ENCODE measurements at regions of chr10 and their contacts with region 1.

Region 1: GRCh38 chr10:60646966-60647796 is 131.1 kb upstream of the CDK1 start:
- DNase-seq: peak; percentile 32 to 75 (median 35)
- ATAC-seq: peak; percentile 86
- H3K4me3 ChIP-seq: no peak overlapping the region
- H3K27ac ChIP-seq: no peak overlapping the region
- H3K4me1 ChIP-seq: peaks cover 0 to 3% of the 10 kb centered on the region in 2 experiments; a peak in 1 of 5 replicates
- H3K27me3 ChIP-seq: no peaks in the 10 kb centered on the region
- CTCF ChIP-seq: peak; percentile 60 to 83 (median 65); a peak in 5 of 6 replicates
- EP300 ChIP-seq: no peak
- POLR2A ChIP-seq: no peak
- RAD21 ChIP-seq: peak; percentile 82 to 85

Region 2: DNA sequence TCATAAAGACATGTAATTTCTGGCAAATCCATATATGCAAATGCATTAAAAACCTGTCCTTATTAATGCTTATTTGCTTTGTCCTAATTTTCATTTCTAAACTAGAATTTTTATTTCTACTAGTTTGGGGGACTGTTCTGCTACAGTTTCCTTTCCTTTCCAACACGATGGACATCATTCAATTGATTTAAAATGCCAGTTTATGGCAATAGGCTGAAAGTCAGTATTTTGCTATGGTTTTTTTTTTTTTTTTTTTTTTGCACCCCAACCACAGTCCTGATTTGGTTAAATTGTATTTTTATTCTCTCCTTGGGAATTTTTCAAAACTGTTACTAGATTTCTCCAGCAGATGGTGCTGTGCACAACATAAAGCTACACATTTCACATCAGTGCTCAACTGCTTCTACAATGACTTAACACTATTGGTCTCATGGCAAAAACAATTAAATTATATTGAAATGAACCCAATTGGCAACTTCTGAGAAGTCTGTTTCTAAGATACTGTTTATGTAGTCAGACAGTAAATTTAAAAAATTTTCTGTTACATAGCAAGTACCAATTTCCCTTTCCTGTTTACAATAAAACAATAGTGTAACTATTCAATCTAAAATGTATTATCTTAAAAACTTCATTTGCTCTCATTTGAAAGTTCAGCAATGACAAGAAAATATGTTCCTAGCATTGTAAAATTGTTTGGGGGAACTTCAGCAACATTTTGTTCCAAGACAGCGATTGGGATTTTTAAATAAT is 547.0 kb before region 1 on chr10:
- CTCF ChIA-PET with region 1: interaction called, 5 read pairs
- POLR2A ChIA-PET with region 1: no interaction called
- in situ Hi-C with region 1: no loop called
- intact Hi-C with region 1: loop called (anchors 5 kb)
- DNase-seq: peak; percentile 53 to 77 (median 60)
- ATAC-seq: peak; percentile 83
- H3K4me3 ChIP-seq: no peak overlapping the region
- H3K27ac ChIP-seq: peak overlapping the region; percentile 54; the same call in 1 of the 3 replicates
- H3K4me1 ChIP-seq: peaks cover 0 to 7% of the 10 kb centered on the region in 2 experiments; a peak in 2 of 5 replicates
- H3K27me3 ChIP-seq: no peaks in the 10 kb centered on the region
- CTCF ChIP-seq: peak; percentile 55 to 89 (median 61); a peak in 4 of 6 replicates
- EP300 ChIP-seq: peak; percentile 50; the same call in 1 of the 2 replicates
- POLR2A ChIP-seq: no peak
- RAD21 ChIP-seq: peak; percentile 65 to 85

Region 3: DNA sequence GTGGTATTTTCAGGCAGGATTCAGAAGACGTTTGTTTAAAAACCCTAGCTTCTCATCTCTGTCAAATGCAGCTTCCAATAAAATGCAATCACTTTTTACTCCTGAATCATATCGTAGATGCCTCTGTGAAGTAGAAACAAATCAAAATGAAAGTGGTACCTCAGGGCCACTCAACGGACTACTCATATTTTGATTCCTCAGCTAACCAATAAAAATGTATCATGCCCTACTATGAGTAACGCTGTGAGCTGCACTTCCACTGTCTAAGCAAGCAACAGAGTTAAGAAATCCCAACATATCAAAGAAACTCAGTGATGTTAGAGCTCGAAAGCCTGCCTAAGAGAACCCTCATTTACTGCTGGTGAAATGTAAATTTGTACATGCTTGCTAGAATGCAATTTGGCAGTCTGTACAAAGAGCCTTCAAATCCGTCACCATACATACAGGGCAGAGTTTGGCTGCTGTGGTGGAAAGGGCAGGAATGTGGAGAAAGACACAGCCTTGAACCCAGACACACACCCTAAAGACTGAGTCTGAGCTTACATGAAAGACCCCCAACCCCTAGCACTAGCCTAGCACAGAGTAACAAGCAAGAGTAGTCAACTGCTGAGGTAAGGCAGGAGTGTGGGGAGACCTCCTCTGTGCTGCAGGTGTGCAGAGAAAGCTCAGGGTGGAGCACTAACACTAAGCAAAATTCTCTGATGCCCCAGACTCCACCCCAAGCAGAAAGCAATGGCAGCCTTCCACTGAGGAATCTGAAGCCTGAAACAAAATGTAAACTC is 409.0 kb before region 1 on chr10:
- CTCF ChIA-PET with region 1: no interaction called
- POLR2A ChIA-PET with region 1: interaction called, 3 read pairs
- in situ Hi-C with region 1: no loop called
- intact Hi-C with region 1: loop called (anchors 5 kb)
- DNase-seq: peak in 2 of 4 experiments; percentile 60 to 62
- ATAC-seq: peak; percentile 99
- H3K4me3 ChIP-seq: no peak overlapping the region
- H3K27ac ChIP-seq: no peak overlapping the region
- H3K4me1 ChIP-seq: peaks cover 5 to 12% of the 10 kb centered on the region in 2 experiments; a peak in 2 of 5 replicates
- H3K27me3 ChIP-seq: no peaks in the 10 kb centered on the region
- CTCF ChIP-seq: peak; percentile 64 to 81 (median 76)
- EP300 ChIP-seq: no peak
- POLR2A ChIP-seq: no peak
- RAD21 ChIP-seq: peak; percentile 90 to 91

Region 4: GRCh38 chr10:60444494-60445064 is 202.6 kb before region 1 on chr10:
- CTCF ChIA-PET with region 1: interaction called, 14 read pairs
- POLR2A ChIA-PET with region 1: no interaction called
- in situ Hi-C with region 1: no loop called
- intact Hi-C with region 1: loop called (anchors 1 kb)
- DNase-seq: peak in 1 of 4 experiments; percentile 30
- ATAC-seq: no peak
- H3K4me3 ChIP-seq: no peak overlapping the region
- H3K27ac ChIP-seq: no peak overlapping the region
- H3K4me1 ChIP-seq: no peaks in the 10 kb centered on the region
- H3K27me3 ChIP-seq: peaks cover 0 to 2% of the 10 kb centered on the region in 2 experiments; a peak in 1 of 5 replicates
- CTCF ChIP-seq: peak in 2 of 3 experiments; percentile 26 to 71; a peak in 3 of 6 replicates
- EP300 ChIP-seq: no peak
- POLR2A ChIP-seq: no peak
- RAD21 ChIP-seq: peak; percentile 77 to 84

Region 5: DNA sequence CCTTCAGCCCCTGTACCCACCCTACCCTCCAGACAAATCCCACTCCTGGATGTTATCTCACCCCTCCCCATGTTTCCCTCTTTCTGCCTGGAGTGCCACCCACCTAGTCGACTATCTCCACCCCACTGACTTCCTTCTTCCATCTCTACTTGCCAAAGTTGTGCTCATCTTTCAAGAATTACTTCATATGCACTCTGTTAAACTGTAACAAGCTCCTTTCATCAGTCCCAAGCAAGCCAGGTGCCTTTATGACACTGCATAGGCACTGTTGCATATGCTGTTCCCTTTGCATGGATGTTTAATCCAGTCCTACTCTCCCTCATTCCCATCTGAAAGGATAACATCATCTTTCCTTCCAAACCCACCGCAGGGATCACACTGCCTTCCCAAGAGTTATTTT is 122.2 kb after region 1 on chr10:
- CTCF ChIA-PET with region 1: no interaction called
- POLR2A ChIA-PET with region 1: no interaction called
- in situ Hi-C with region 1: no loop called
- intact Hi-C with region 1: loop called (anchors 5 kb)
- DNase-seq: no peak
- ATAC-seq: no peak; the same call in 2 of the 3 replicates
- H3K4me3 ChIP-seq: no peak overlapping the region
- H3K27ac ChIP-seq: no peak overlapping the region
- H3K4me1 ChIP-seq: no peaks in the 10 kb centered on the region
- H3K27me3 ChIP-seq: peaks cover 0 to 10% of the 10 kb centered on the region in 2 experiments; a peak in 2 of 5 replicates
- CTCF ChIP-seq: no peak
- EP300 ChIP-seq: no peak
- POLR2A ChIP-seq: no peak
- RAD21 ChIP-seq: no peak